T-cell (primary cell): ENCODE measurements at regions of chr2 and their contacts with region 1.

Region 1: DNA sequence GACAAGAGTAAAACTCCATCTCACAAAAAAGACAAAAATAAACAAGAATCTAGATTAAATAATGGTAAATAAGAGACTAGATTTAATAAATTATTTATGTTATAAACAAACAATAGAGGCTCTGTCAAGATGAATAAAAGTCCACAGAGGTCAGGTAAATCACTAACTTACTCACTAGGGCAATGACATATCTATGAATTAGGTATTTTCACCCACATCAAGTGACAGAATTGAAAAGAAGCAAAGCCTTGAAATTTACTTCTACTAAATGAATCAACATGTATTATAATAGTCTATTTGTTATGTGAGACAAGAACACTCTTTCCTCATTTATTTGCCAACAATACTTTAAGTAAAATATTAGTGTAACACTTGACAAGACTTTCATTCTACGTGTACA is 41.7 kb downstream of the FBXO11 start:
- DNase-seq: no peak
- ATAC-seq: no peak
- H3K4me3 ChIP-seq: no peak overlapping the region
- H3K4me3 Mint-ChIP-seq: no peak overlapping the region
- H3K27ac ChIP-seq: no peak overlapping the region
- H3K27ac Mint-ChIP-seq: peak overlapping the region; percentile 44 to 50
- H3K4me1 ChIP-seq: peaks cover 5 to 14% of the 10 kb centered on the region in 2 experiments
- H3K4me1 Mint-ChIP-seq: peaks cover 57 to 83% (median 78%) of the 10 kb centered on the region in 3 donors
- H3K27me3 ChIP-seq: no peaks in the 10 kb centered on the region
- H3K27me3 Mint-ChIP-seq: no peaks in the 10 kb centered on the region

Region 2: DNA sequence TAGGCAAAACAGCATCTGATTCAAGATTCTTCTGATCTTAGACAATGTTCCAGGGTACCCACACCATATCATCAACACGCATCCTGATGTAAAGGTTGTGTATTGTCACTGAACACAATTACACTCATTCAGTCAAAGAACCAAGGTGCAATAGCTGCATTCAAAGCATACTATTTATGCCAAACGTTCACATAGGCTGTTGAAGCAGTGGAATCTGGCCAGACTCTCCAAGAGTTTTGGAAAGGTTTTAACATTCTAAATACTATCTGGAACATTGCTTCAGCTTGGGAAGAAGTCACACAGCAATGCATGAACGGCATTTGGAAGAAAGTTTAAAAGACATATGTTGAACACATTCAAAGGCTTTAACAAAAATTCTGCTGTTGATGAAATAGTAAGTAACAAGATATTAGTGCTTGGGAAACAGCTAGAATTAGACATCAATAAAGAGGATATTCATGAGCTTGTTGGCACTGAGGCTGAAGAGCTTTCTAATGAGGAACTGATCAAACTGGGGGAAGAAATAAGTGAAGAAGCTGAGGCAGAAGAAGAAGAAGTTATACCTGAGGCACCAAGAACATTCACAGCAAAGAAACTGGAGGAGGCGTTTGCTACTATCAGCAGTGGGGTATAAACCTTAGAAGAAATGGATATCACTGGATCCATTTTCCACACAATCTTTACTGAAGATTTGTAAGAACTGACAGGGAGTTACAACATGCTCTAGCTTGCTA is 129.3 kb before region 1 on chr2:
- CTCF ChIA-PET with region 1: no interaction called
- POLR2A ChIA-PET with region 1: no interaction called
- DNase-seq: no peak
- ATAC-seq: no peak
- H3K4me3 ChIP-seq: no peak overlapping the region
- H3K4me3 Mint-ChIP-seq: no peak overlapping the region
- H3K27ac ChIP-seq: no peak overlapping the region
- H3K27ac Mint-ChIP-seq: no peak overlapping the region
- H3K4me1 ChIP-seq: no peaks in the 10 kb centered on the region
- H3K4me1 Mint-ChIP-seq: no peaks in the 10 kb centered on the region
- H3K27me3 ChIP-seq: peaks cover 0 to 2% of the 10 kb centered on the region in 2 experiments
- H3K27me3 Mint-ChIP-seq: peaks cover 3% of the 10 kb centered on the region in 2 donors

Region 3: GRCh38 chr2:47819834-47820233 is 44.7 kb before region 1 on chr2:
- CTCF ChIA-PET with region 1: no interaction called
- POLR2A ChIA-PET with region 1: no interaction called
- DNase-seq: no peak
- ATAC-seq: no peak
- H3K4me3 ChIP-seq: no peak overlapping the region
- H3K4me3 Mint-ChIP-seq: no peak overlapping the region
- H3K27ac ChIP-seq: no peak overlapping the region
- H3K27ac Mint-ChIP-seq: no peak overlapping the region
- H3K4me1 ChIP-seq: no peaks in the 10 kb centered on the region
- H3K4me1 Mint-ChIP-seq: no peaks in the 10 kb centered on the region
- H3K27me3 ChIP-seq: no peaks in the 10 kb centered on the region
- H3K27me3 Mint-ChIP-seq: no peaks in the 10 kb centered on the region

Region 4: DNA sequence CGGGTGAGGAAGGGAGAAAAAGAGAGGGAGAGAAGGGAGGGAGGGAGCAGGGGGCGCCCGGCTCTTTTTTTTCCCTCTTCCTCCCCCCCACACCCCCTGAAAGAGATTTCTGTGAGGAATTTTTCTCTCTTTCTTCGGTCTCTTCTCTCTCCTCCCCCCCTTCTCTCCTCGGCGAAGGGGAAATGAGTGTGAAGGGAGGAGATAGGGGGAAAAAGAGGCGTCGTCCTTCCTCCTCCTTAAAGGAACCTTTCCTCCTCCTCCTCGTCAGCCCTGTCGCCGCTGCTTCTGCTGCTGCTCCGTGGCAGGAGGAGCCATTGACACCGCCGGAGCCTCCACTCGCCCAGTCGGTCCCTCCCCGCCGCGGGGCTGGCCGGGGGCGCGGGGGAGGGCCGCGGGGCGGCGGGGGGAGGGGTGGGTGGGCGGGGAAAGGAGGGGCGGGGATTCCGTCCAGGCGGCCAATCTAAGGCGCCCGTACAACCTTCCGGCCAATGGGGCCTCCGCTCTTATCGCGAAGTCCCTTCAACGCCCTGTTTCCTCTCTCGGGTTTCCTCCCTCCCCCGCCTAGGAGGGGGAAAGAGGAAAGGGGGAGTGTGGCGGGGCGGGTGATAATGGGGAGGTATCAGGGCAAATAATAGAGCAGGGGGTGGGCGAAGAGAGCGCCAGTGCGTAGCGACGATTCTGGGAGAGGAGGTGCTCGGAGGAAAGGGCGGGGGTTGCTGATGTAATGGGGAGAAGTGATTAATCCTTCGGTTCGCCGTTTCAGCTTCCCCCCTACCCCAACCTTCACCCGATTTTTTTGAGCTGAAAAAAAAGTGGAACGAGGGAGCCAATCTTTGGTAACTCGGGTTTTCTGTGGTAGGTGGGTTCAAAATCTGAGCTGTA is 41.8 kb after region 1 on chr2 and contains the start of gene FBXO11:
- CTCF ChIA-PET with region 1: interaction called, 5 to 20 read pairs
- POLR2A ChIA-PET with region 1: interaction called, 3 to 6 read pairs
- DNase-seq: peak; percentile 90 to 98 (median 96)
- ATAC-seq: peak; percentile 80 to 84 (median 81)
- H3K4me3 ChIP-seq: peak within 1 kb of the TSS; percentile 71 to 81
- H3K4me3 Mint-ChIP-seq: peak within 1 kb of the TSS; percentile 86 to 96 (median 88)
- H3K27ac ChIP-seq: peak within 1 kb of the TSS; percentile 97
- H3K27ac Mint-ChIP-seq: peak within 1 kb of the TSS; percentile 94
- H3K4me1 ChIP-seq: peaks cover 6 to 26% of the 10 kb centered on the region in 2 experiments
- H3K4me1 Mint-ChIP-seq: peaks cover 39 to 49% (median 41%) of the 10 kb centered on the region in 3 donors
- H3K27me3 ChIP-seq: no peaks in the 10 kb centered on the region
- H3K27me3 Mint-ChIP-seq: no peaks in the 10 kb centered on the region
- total RNA-seq, gene FBXO11: 70.2 to 90.0 (median 74.6) TPM

Region 5: GRCh38 chr2:48105848-48106247 is 241.3 kb after region 1 on chr2:
- CTCF ChIA-PET with region 1: interaction called in 1 of 2 experiments, 10 read pairs
- POLR2A ChIA-PET with region 1: no interaction called
- DNase-seq: no peak
- ATAC-seq: no peak
- H3K4me3 ChIP-seq: no peak overlapping the region
- H3K4me3 Mint-ChIP-seq: no peak overlapping the region
- H3K27ac ChIP-seq: no peak overlapping the region
- H3K27ac Mint-ChIP-seq: no peak overlapping the region
- H3K4me1 ChIP-seq: peaks cover 0 to 12% of the 10 kb centered on the region in 2 experiments
- H3K4me1 Mint-ChIP-seq: peaks cover 9 to 14% (median 12%) of the 10 kb centered on the region in 3 donors
- H3K27me3 ChIP-seq: peaks cover 0 to 6% of the 10 kb centered on the region in 2 experiments
- H3K27me3 Mint-ChIP-seq: peaks cover 0 to 5% of the 10 kb centered on the region in 2 donors